GM13976 (cell line): ENCODE measurements at regions of chr15 and their contacts with region 1.

Region 1: GRCh38 chr15:41989934-41990605 is 17.7 kb upstream of the EHD4 start:
- DNase-seq: no peak
- CTCF ChIP-seq: no peak

Region 2: DNA sequence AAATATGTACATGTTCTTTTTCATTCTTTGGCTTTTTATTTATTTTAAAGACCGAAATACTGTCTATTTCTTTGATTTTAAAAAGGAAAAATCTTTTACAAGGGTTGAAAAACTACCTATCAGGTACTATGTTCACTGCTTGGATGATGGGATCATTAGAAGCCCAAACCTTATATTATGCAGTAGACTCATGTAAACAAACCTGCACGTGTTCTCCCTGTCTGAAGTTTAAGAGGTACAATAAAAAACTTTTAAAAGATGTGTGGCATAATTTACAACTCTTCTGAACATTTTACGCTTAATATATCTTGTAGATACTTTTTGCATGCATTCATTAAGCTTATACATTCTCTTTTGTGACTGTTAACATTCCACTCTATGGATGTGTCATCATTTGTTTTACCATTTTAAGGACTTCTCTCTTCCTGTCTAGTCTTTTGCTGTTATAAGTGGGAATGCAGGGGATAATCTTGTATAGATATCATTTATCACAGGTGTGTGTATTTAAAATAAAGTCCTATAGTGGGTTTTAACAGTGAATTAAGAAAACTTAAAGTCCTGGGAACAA is 323.6 kb before region 1 on chr15:
- in situ Hi-C with region 1: no loop called
- DNase-seq: no peak
- CTCF ChIP-seq: no peak

Region 3: GRCh38 chr15:42059661-42060476 is 69.8 kb after region 1 on chr15:
- in situ Hi-C with region 1: loop called (anchors 5 kb)
- DNase-seq: peak; percentile 74
- CTCF ChIP-seq: peak; percentile 81

Region 4: DNA sequence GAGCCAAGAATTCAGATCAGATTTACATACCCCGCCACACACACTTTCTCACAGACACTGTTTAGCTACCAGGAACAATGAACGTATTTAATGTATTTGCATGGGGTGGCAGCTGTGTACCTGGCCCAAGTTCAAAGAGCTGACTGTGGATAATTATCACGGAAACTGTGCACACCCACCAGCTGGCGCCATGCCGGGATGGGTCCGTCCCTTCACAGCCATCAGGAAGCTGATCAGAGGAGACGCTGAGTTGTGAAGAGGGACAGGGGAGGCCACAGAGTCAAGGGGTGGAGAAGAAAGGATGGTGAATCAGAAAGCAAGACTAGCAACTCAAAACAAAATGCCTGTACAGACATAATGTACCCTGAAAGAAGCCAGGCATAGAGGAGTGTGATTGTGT is 117.4 kb after region 1 on chr15:
- in situ Hi-C with region 1: no loop called
- DNase-seq: no peak
- CTCF ChIP-seq: no peak

Region 5: DNA sequence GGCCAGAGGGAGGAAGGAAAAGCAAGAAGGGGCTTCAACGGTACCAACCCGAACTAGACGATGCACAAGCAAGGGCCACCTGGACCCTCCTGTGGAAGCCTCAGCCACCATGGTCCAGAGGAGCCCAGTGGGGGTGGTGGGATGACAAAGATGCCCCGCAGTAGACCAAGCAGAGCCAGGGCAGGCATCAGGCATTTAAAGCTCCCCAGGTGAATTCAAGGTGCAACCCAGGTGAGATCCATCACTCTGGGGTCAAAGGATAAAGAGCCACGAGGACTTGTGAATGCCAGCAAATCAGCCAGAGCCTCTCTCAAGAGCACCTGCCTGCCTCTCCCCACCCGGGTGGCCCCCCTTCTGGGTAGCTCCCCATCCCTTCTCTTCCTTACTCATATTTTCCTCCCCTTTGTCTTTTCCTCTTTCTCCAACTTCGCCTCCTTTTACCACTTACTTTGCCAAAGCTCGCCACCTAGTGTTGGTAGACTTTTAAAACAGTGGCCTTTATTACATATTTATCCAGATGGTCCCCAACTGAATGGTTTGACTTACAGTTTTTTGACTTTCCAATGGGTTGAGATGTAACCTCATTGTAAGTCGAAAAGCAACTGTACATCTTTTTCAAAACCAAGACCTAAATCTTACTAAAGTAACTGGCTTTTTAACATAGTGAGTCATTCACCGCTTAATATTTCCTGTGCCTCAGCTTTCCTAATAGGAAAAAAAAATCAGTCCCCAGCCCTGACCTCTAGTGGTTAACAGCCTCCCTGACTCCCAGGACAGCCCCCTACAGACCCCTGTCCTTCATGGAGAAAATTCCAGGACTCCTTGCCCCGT is 147.6 kb after region 1 on chr15:
- in situ Hi-C with region 1: loop called (anchors 10 kb)
- DNase-seq: peak; percentile 62
- CTCF ChIP-seq: peak; percentile 71